Activated CD4-positive, alpha-beta T cell treated with anti-CD3 and anti-CD28 coated beads, Interleukin-2, amount 10 ng/mL, durations not matched to agents 24 days and 14 days (primary cell): ENCODE measurements at regions of chr5 and their contacts with region 1.

Region 1: GRCh38 chr5:90956511-90957097 is 398.0 kb downstream of the ADGRV1 start:
- DNase-seq: no peak
- H3K4me3 Mint-ChIP-seq: no peak overlapping the region
- H3K27ac Mint-ChIP-seq: no peak overlapping the region
- H3K4me1 Mint-ChIP-seq: peaks cover 4% of the 10 kb centered on the region
- H3K27me3 Mint-ChIP-seq: peaks cover 16% of the 10 kb centered on the region

Region 2: GRCh38 chr5:90940227-90940995 is 16.2 kb before region 1 on chr5:
- intact Hi-C with region 1: loop called (anchors 1 kb)
- DNase-seq: peak; percentile 84
- H3K4me3 Mint-ChIP-seq: no peak overlapping the region
- H3K27ac Mint-ChIP-seq: peak overlapping the region; percentile 81
- H3K4me1 Mint-ChIP-seq: peaks cover 10% of the 10 kb centered on the region
- H3K27me3 Mint-ChIP-seq: no peaks in the 10 kb centered on the region

Region 3: GRCh38 chr5:91074615-91075014 is 118.0 kb after region 1 on chr5:
- intact Hi-C with region 1: loop called (anchors 5 kb)
- DNase-seq: no peak
- H3K4me3 Mint-ChIP-seq: no peak overlapping the region
- H3K27ac Mint-ChIP-seq: no peak overlapping the region
- H3K4me1 Mint-ChIP-seq: peaks cover 6% of the 10 kb centered on the region
- H3K27me3 Mint-ChIP-seq: peaks cover 23% of the 10 kb centered on the region